ENCODE measurements at regions of chr7 and their contacts with region 1.

Region 1: GRCh38 chr7:155356323-155357105 is 58.8 kb downstream of the INSIG1 start:
- DNase-seq: peak in 3 of 5 donors; percentile 57 to 59 (median 58)
- H3K4me3 ChIP-seq: no peak overlapping the region
- H3K27ac ChIP-seq: no peak overlapping the region
- H3K4me1 ChIP-seq: no peaks in the 10 kb centered on the region
- H3K27me3 ChIP-seq: peaks cover 3% of the 10 kb centered on the region
- CTCF ChIP-seq: peak; percentile 21

Region 2: GRCh38 chr7:154927624-154928143 is 428.8 kb before region 1 on chr7:
- intact Hi-C with region 1: loop called (anchors 10 kb)
- DNase-seq: peak in 3 of 5 donors; percentile 80 to 94 (median 90)
- H3K4me3 ChIP-seq: peak overlapping the region; percentile 80 to 95 (median 90)
- H3K27ac ChIP-seq: peak overlapping the region; percentile 57 to 92
- H3K4me1 ChIP-seq: peaks cover 0 to 15% (median 6%) of the 10 kb centered on the region in 3 donors
- H3K27me3 ChIP-seq: no peaks in the 10 kb centered on the region
- CTCF ChIP-seq: peak; percentile 58

Region 3: GRCh38 chr7:155466814-155467733 is 110.6 kb after region 1 on chr7:
- intact Hi-C with region 1: no loop called
- DNase-seq: peak; percentile 65 to 74 (median 72)
- H3K4me3 ChIP-seq: no peak overlapping the region
- H3K27ac ChIP-seq: no peak overlapping the region
- H3K4me1 ChIP-seq: peaks cover 0 to 2% (median 0%) of the 10 kb centered on the region in 3 donors
- H3K27me3 ChIP-seq: peaks cover 82% of the 10 kb centered on the region
- CTCF ChIP-seq: no peak

Region 4: GRCh38 chr7:155746188-155746587 is 389.7 kb after region 1 on chr7:
- intact Hi-C with region 1: no loop called
- DNase-seq: no peak
- H3K4me3 ChIP-seq: no peak overlapping the region
- H3K27ac ChIP-seq: no peak overlapping the region
- H3K4me1 ChIP-seq: no peaks in the 10 kb centered on the region
- H3K27me3 ChIP-seq: no peaks in the 10 kb centered on the region
- CTCF ChIP-seq: no peak